CD8-positive, alpha-beta T cell (primary cell): ENCODE measurements at regions of chr2 and their contacts with region 1.

Region 1: GRCh38 chr2:110843959-110844510 is 111.7 kb downstream of the ACOXL start:
- DNase-seq: no peak
- ATAC-seq: no peak
- H3K4me3 ChIP-seq: no peak overlapping the region
- H3K4me3 Mint-ChIP-seq: no peak overlapping the region
- H3K27ac ChIP-seq: no peak overlapping the region
- H3K27ac Mint-ChIP-seq: no peak overlapping the region
- H3K4me1 ChIP-seq: peaks cover 33% of the 10 kb centered on the region
- H3K4me1 Mint-ChIP-seq: peaks cover 60% of the 10 kb centered on the region
- H3K27me3 ChIP-seq: no peaks in the 10 kb centered on the region
- H3K27me3 Mint-ChIP-seq: no peaks in the 10 kb centered on the region
- CTCF ChIP-seq: no peak

Region 2: GRCh38 chr2:109647636-109648035 is 1196.4 kb before region 1 on chr2:
- CTCF ChIA-PET with region 1: no interaction called
- POLR2A ChIA-PET with region 1: no interaction called
- intact Hi-C with region 1: no loop called
- DNase-seq: no peak
- ATAC-seq: no peak
- H3K4me3 ChIP-seq: no peak overlapping the region
- H3K4me3 Mint-ChIP-seq: no peak overlapping the region
- H3K27ac ChIP-seq: no peak overlapping the region
- H3K27ac Mint-ChIP-seq: no peak overlapping the region
- H3K4me1 ChIP-seq: no peaks in the 10 kb centered on the region
- H3K4me1 Mint-ChIP-seq: no peaks in the 10 kb centered on the region
- H3K27me3 ChIP-seq: no peaks in the 10 kb centered on the region
- H3K27me3 Mint-ChIP-seq: peaks cover 17% of the 10 kb centered on the region
- CTCF ChIP-seq: no peak

Region 3: GRCh38 chr2:110677530-110678456 is 166.2 kb before region 1 on chr2 and contains the start of gene BUB1:
- CTCF ChIA-PET with region 1: no interaction called
- POLR2A ChIA-PET with region 1: no interaction called
- intact Hi-C with region 1: loop called in 1 of 2 experiments (anchors 10 kb)
- DNase-seq: peak; percentile 87 to 98 (median 95)
- ATAC-seq: peak; percentile 95
- H3K4me3 ChIP-seq: peak within 1 kb of the TSS; percentile 65 to 91
- H3K4me3 Mint-ChIP-seq: peak within 1 kb of the TSS; percentile 96
- H3K27ac ChIP-seq: peak within 1 kb of the TSS; percentile 66 to 67
- H3K27ac Mint-ChIP-seq: peak within 1 kb of the TSS; percentile 93
- H3K4me1 ChIP-seq: peaks cover 13% of the 10 kb centered on the region
- H3K4me1 Mint-ChIP-seq: peaks cover 27% of the 10 kb centered on the region
- H3K27me3 ChIP-seq: peaks cover 0 to 2% of the 10 kb centered on the region in 2 experiments
- H3K27me3 Mint-ChIP-seq: no peaks in the 10 kb centered on the region
- CTCF ChIP-seq: no peak
- total RNA-seq, gene BUB1: 2.4 to 3.1 TPM